Aorta (tissue), 5 donors: ENCODE measurements at regions of chr4 and their contacts with region 1.

Region 1: GRCh38 chr4:95061220-95061619 is 303.5 kb downstream of the BMPR1B start:
- DNase-seq: no peak
- ATAC-seq: no peak
- H3K4me3 ChIP-seq: no peak overlapping the region
- H3K27ac ChIP-seq: no peak overlapping the region
- H3K4me1 ChIP-seq: peaks cover 5% of the 10 kb centered on the region in 2 donors
- H3K27me3 ChIP-seq: no peaks in the 10 kb centered on the region

Region 2: GRCh38 chr4:94913316-94913715 is 147.9 kb before region 1 on chr4:
- intact Hi-C with region 1: no loop called
- DNase-seq: no peak
- ATAC-seq: no peak
- H3K4me3 ChIP-seq: no peak overlapping the region
- H3K27ac ChIP-seq: no peak overlapping the region
- H3K4me1 ChIP-seq: no peaks in the 10 kb centered on the region
- H3K27me3 ChIP-seq: no peaks in the 10 kb centered on the region

Region 3: GRCh38 chr4:94934201-94934600 is 127.0 kb before region 1 on chr4:
- intact Hi-C with region 1: loop called in 1 of 2 experiments (anchors 10 kb)
- DNase-seq: no peak
- ATAC-seq: no peak
- H3K4me3 ChIP-seq: peak overlapping the region; percentile 20 to 26
- H3K27ac ChIP-seq: no peak overlapping the region
- H3K4me1 ChIP-seq: peaks cover 2 to 5% of the 10 kb centered on the region in 2 donors
- H3K27me3 ChIP-seq: no peaks in the 10 kb centered on the region